GM13976 (cell line): ENCODE measurements at regions of chr9 and their contacts with region 1.

Region 1: GRCh38 chr9:130461218-130461630 is 16.5 kb downstream of the ASS1 start:
- DNase-seq: peak; percentile 89
- CTCF ChIP-seq: peak; percentile 97

Region 2: GRCh38 chr9:130352081-130352480 is 109.1 kb before region 1 on chr9:
- in situ Hi-C with region 1: no loop called
- DNase-seq: no peak
- CTCF ChIP-seq: no peak

Region 3: GRCh38 chr9:130693426-130694191 is 232.4 kb after region 1 on chr9 and contains the start of gene EXOSC2:
- in situ Hi-C with region 1: loop called (anchors 25 kb)
- DNase-seq: peak; percentile 98
- CTCF ChIP-seq: no peak

Region 4: DNA sequence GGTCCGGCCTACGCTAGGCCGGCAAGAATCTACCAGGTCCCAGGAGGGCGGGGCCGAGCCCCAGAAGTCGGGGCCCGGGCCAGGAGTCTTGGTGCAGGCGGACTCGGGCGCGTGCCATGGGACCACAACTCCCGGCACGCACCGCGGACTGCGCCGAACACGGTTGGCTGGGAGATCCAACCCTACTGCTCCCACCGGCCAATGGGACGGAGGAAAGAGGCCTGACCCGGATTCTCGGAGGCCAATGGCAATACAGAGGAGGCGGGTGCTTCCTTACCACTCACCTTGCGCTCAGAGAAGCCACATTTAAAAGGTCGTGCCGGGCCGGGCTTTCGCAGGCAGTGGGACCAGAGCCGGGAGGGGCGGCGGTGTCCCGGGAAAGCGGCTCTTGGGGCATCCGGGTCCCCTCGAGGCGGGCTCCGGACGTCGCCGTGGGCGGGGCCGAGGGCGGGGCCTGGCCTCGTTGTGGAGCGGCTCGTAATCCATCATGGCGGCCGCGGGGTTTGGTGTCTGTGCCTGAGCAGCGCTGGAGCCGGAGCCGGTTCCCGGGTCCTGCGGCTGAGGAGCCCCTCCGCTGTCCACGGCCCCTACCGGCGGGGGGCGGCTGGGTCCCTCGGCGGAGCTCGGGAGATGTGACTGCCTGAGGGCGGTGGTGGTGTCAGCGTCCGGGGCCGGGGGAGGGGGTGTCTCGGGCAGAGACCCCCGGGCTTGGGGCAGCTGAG is 251.5 kb after region 1 on chr9:
- in situ Hi-C with region 1: no loop called
- DNase-seq: peak; percentile 98
- CTCF ChIP-seq: no peak